Naive thymus-derived CD4-positive, alpha-beta T cell (primary cell): ENCODE measurements at regions of chr1 and their contacts with region 1.

Region 1: GRCh38 chr1:100866041-100866900 is 28.4 kb downstream of the EXTL2 start:
- DNase-seq: peak in 4 of 9 donors; percentile 6 to 21 (median 14)
- ATAC-seq: peak; percentile 51
- H3K4me3 ChIP-seq: no peak overlapping the region
- H3K4me3 Mint-ChIP-seq: no peak overlapping the region
- H3K27ac ChIP-seq: no peak overlapping the region
- H3K27ac Mint-ChIP-seq: no peak overlapping the region
- H3K4me1 ChIP-seq: no peaks in the 10 kb centered on the region
- H3K4me1 Mint-ChIP-seq: peaks cover 0 to 2% (median 0%) of the 10 kb centered on the region in 7 donors
- H3K27me3 ChIP-seq: no peaks in the 10 kb centered on the region
- H3K27me3 Mint-ChIP-seq: no peaks in the 10 kb centered on the region

Region 2: GRCh38 chr1:99180343-99180808 is 1685.9 kb before region 1 on chr1:
- CTCF ChIA-PET with region 1: interaction called, 3 read pairs
- POLR2A ChIA-PET with region 1: no interaction called
- intact Hi-C with region 1: loop called (anchors 1 to 5 kb)
- DNase-seq: peak in 8 of 9 donors; percentile 17 to 65 (median 51)
- ATAC-seq: peak; percentile 82
- H3K4me3 ChIP-seq: no peak overlapping the region
- H3K4me3 Mint-ChIP-seq: no peak overlapping the region
- H3K27ac ChIP-seq: no peak overlapping the region
- H3K27ac Mint-ChIP-seq: no peak overlapping the region
- H3K4me1 ChIP-seq: no peaks in the 10 kb centered on the region
- H3K4me1 Mint-ChIP-seq: no peaks in the 10 kb centered on the region
- H3K27me3 ChIP-seq: no peaks in the 10 kb centered on the region
- H3K27me3 Mint-ChIP-seq: peaks cover 0 to 6% (median 0%) of the 10 kb centered on the region in 5 donors

Region 3: GRCh38 chr1:99808391-99809115 is 1057.7 kb before region 1 on chr1:
- CTCF ChIA-PET with region 1: interaction called, 9 read pairs
- POLR2A ChIA-PET with region 1: no interaction called
- intact Hi-C with region 1: loop called (anchors 1 kb)
- DNase-seq: peak in 7 of 9 donors; percentile 32 to 63 (median 55)
- ATAC-seq: peak; percentile 81
- H3K4me3 ChIP-seq: no peak overlapping the region
- H3K4me3 Mint-ChIP-seq: peak overlapping the region in 1 of 10 donors; percentile 16
- H3K27ac ChIP-seq: no peak overlapping the region
- H3K27ac Mint-ChIP-seq: no peak overlapping the region
- H3K4me1 ChIP-seq: no peaks in the 10 kb centered on the region
- H3K4me1 Mint-ChIP-seq: peaks cover 0 to 11% (median 4%) of the 10 kb centered on the region in 7 donors
- H3K27me3 ChIP-seq: no peaks in the 10 kb centered on the region
- H3K27me3 Mint-ChIP-seq: peaks cover 6 to 21% (median 8%) of the 10 kb centered on the region in 5 donors

Region 4: GRCh38 chr1:100249537-100250257 is 616.6 kb before region 1 on chr1 and contains the start of gene DBT:
- CTCF ChIA-PET with region 1: no interaction called
- POLR2A ChIA-PET with region 1: no interaction called
- intact Hi-C with region 1: loop called in 1 of 2 experiments (anchors 10 kb)
- DNase-seq: peak; percentile 64 to 93 (median 88)
- ATAC-seq: peak; percentile 100
- H3K4me3 ChIP-seq: peak within 1 kb of the TSS; percentile 82
- H3K4me3 Mint-ChIP-seq: peak within 1 kb of the TSS in 1 of 10 donors; percentile 30
- H3K27ac ChIP-seq: peak within 1 kb of the TSS; percentile 79
- H3K27ac Mint-ChIP-seq: peak within 1 kb of the TSS in 2 of 9 donors; percentile 22 to 26
- H3K4me1 ChIP-seq: peaks cover 7 to 23% of the 10 kb centered on the region in 2 donors
- H3K4me1 Mint-ChIP-seq: peaks cover 9 to 24% (median 19%) of the 10 kb centered on the region in 7 donors
- H3K27me3 ChIP-seq: no peaks in the 10 kb centered on the region
- H3K27me3 Mint-ChIP-seq: peaks cover 0 to 8% (median 0%) of the 10 kb centered on the region in 5 donors
- total RNA-seq, gene DBT: 9.2 to 18.4 (median 9.7) TPM

Region 5: DNA sequence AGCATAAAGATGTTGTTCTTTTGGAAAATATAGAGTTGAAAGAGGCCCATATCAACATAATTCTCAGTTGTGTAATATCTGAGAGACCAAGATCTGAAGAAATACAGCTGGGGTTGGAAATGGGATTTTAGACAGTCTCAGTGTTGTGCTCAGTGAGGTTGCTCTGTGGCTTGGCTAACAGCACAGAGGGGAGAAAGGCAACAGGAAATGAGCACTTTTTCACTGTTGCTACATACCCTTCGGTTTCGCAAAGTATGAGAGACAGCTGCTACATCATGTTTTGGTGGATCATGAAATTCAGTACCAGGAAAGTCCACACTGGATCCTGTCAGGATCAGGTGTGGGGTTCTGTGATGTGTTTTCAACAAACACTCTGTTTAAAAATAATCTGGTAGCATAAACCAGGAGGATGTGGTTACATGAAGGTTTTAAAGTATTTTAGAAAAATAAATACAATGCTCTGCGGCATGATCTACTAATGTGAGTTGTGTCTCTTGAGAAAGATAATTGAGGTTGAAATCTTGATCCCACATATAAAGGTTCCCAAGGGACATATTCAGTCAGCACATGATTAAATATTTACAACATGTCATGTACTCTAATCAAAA is 335.3 kb before region 1 on chr1:
- CTCF ChIA-PET with region 1: no interaction called
- POLR2A ChIA-PET with region 1: no interaction called
- intact Hi-C with region 1: loop called (anchors 5 kb)
- DNase-seq: peak in 6 of 9 donors; percentile 8 to 46 (median 30)
- ATAC-seq: peak; percentile 94
- H3K4me3 ChIP-seq: peak overlapping the region; percentile 17
- H3K4me3 Mint-ChIP-seq: peak overlapping the region in 8 of 10 donors; percentile 20 to 61 (median 52)
- H3K27ac ChIP-seq: no peak overlapping the region
- H3K27ac Mint-ChIP-seq: peak overlapping the region; percentile 32 to 88 (median 51)
- H3K4me1 ChIP-seq: peaks cover 14 to 33% of the 10 kb centered on the region in 2 donors
- H3K4me1 Mint-ChIP-seq: peaks cover 28 to 36% (median 34%) of the 10 kb centered on the region in 7 donors
- H3K27me3 ChIP-seq: no peaks in the 10 kb centered on the region
- H3K27me3 Mint-ChIP-seq: peaks cover 3 to 30% (median 10%) of the 10 kb centered on the region in 5 donors